HEK293T (cell line): ENCODE measurements at regions of chr19 and their contacts with region 1.

Region 1: DNA sequence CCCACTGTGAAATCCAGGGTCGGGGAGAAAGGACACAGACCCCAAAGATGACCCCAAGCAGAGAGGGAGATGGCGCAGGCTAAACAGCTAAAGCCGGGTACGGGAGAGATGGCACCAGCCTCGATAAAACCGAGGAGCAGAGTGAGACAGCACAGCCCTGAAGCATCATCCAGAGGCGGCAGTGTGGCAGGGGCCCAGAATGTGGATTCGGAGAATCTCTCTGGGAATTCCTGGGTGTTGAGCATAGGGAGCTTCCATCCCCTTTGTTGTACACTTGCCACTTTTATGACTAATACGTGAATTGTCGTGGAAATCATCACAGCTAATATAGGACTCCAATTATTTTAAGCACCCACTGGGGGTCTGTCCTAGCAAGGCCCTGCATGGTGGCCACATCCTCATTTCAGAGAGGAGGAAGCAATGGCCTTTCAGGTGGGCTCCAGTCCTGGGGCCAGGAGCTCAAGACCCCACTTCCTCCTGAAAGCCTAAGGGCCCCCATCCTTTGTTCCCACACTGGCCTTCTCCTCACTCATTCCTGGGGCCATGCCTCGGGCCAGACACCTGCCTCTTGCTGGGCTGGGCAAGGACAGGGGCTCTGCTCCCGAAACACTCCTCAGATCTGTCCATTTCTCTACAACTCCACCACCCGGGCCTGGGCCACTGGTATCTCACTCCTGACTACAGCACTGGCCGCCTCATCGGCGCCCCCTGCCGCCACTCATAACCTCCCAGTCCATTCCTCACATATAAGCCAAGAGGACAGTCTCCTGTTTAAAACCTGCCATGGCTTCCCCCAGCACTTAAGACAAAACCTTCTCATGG is 29.3 kb upstream of the ATP1A3 start:
- DNase-seq: peak; percentile 69

Region 2: GRCh38 chr19:42010245-42011126 is 12.8 kb before region 1 on chr19:
- CTCF ChIA-PET with region 1: interaction called, 10 read pairs
- POLR2A ChIA-PET with region 1: no interaction called
- DNase-seq: no peak